Naive thymus-derived CD4-positive, alpha-beta T cell (primary cell): ENCODE measurements at regions of chr9 and their contacts with region 1.

Region 1: GRCh38 chr9:73183917-73184861 is 32.5 kb downstream of the ANXA1 start:
- DNase-seq: peak in 6 of 9 donors; percentile 41 to 70 (median 57)
- ATAC-seq: peak; percentile 50
- H3K4me3 ChIP-seq: no peak overlapping the region
- H3K4me3 Mint-ChIP-seq: no peak overlapping the region
- H3K27ac ChIP-seq: no peak overlapping the region
- H3K27ac Mint-ChIP-seq: no peak overlapping the region
- H3K4me1 ChIP-seq: no peaks in the 10 kb centered on the region
- H3K4me1 Mint-ChIP-seq: peaks cover 0 to 7% (median 0%) of the 10 kb centered on the region in 7 donors
- H3K27me3 ChIP-seq: no peaks in the 10 kb centered on the region
- H3K27me3 Mint-ChIP-seq: peaks cover 17 to 37% (median 25%) of the 10 kb centered on the region in 5 donors

Region 2: GRCh38 chr9:72038890-72039410 is 1145.2 kb before region 1 on chr9:
- CTCF ChIA-PET with region 1: no interaction called
- POLR2A ChIA-PET with region 1: no interaction called
- intact Hi-C with region 1: loop called in 1 of 2 experiments (anchors 5 kb)
- DNase-seq: peak; percentile 15 to 59 (median 41)
- ATAC-seq: peak; percentile 76
- H3K4me3 ChIP-seq: no peak overlapping the region
- H3K4me3 Mint-ChIP-seq: peak overlapping the region in 1 of 10 donors; percentile 66
- H3K27ac ChIP-seq: no peak overlapping the region
- H3K27ac Mint-ChIP-seq: no peak overlapping the region
- H3K4me1 ChIP-seq: peaks cover 0 to 3% of the 10 kb centered on the region in 2 donors
- H3K4me1 Mint-ChIP-seq: peaks cover 0 to 7% (median 4%) of the 10 kb centered on the region in 7 donors
- H3K27me3 ChIP-seq: no peaks in the 10 kb centered on the region
- H3K27me3 Mint-ChIP-seq: peaks cover 4 to 22% (median 6%) of the 10 kb centered on the region in 5 donors

Region 3: DNA sequence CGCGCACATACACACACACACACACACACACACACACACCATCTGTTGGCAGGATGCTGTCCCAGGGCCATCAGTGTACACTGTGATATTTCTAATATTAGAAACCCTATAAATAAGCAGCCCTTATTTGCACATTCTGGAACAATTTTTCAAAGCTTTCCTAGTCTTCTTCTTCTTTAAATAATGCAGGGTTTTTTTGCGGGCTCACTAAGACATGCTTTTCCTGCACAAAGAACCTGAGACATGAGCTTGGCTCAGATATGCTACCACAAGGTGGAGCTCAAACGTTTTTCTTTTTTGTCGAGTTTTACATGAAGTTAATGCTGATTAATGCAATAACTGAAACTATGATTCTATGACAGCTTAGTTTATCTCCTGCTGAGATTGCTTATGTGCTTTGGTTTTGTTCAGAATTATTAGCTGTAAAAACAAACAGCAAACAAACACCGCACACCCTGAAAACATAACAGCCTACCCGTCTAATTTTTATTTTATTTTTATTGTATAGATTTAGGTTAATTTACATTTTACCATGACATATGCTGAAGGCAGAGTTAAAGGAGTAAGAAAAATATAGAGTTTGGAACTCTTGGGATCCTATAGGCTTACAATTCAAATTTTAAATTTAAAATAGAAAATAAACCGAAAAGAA is 327.1 kb before region 1 on chr9:
- CTCF ChIA-PET with region 1: no interaction called
- POLR2A ChIA-PET with region 1: no interaction called
- intact Hi-C with region 1: loop called (anchors 2 to 5 kb)
- DNase-seq: peak in 1 of 9 donors; percentile 4
- ATAC-seq: peak; percentile 45
- H3K4me3 ChIP-seq: no peak overlapping the region
- H3K4me3 Mint-ChIP-seq: no peak overlapping the region
- H3K27ac ChIP-seq: no peak overlapping the region
- H3K27ac Mint-ChIP-seq: no peak overlapping the region
- H3K4me1 ChIP-seq: no peaks in the 10 kb centered on the region
- H3K4me1 Mint-ChIP-seq: peaks cover 0 to 5% (median 0%) of the 10 kb centered on the region in 7 donors
- H3K27me3 ChIP-seq: no peaks in the 10 kb centered on the region
- H3K27me3 Mint-ChIP-seq: peaks cover 0 to 5% (median 0%) of the 10 kb centered on the region in 5 donors

Region 4: GRCh38 chr9:73081979-73082657 is 102.1 kb before region 1 on chr9:
- CTCF ChIA-PET with region 1: no interaction called
- POLR2A ChIA-PET with region 1: no interaction called
- intact Hi-C with region 1: loop called in 1 of 2 experiments (anchors 1 kb)
- DNase-seq: peak in 4 of 9 donors; percentile 8 to 20 (median 15)
- ATAC-seq: peak; percentile 57
- H3K4me3 ChIP-seq: no peak overlapping the region
- H3K4me3 Mint-ChIP-seq: no peak overlapping the region
- H3K27ac ChIP-seq: no peak overlapping the region
- H3K27ac Mint-ChIP-seq: no peak overlapping the region
- H3K4me1 ChIP-seq: no peaks in the 10 kb centered on the region
- H3K4me1 Mint-ChIP-seq: no peaks in the 10 kb centered on the region
- H3K27me3 ChIP-seq: no peaks in the 10 kb centered on the region
- H3K27me3 Mint-ChIP-seq: peaks cover 8 to 31% (median 18%) of the 10 kb centered on the region in 5 donors

Region 5: DNA sequence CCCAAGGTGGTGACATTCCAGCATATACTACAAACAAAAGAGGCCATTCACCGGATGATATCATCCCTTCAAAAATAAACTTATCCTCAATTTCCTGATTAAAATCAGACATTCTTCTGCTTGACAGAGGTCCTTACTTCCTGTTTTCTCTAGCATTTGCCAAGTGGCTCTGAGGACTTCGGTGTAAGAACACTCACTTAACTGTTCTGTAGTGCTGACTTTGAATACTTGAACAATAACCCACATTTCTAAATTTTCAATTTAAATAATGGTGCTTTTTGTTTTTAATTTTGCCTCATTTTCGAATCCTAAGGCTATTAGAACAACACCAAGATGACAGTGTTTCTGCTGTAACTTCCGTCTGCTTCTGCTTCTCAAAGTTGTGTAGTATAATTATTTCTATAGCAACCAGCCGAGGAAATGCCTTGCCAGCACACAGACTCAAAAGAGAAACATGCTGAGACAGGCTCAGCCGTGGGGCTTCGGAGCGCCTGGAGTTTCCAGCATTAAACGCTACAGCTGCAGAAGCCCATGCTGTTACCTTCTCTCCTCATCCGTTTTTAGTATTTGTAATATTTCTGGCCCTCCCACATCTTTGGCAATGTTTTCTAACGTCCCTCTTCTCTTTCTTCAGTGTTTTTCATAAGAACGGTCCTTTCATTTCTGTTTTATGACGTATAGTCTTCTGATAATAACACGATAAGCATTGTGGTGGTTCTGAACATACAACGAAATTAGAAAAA is 52.0 kb before region 1 on chr9:
- CTCF ChIA-PET with region 1: interaction called, 4 read pairs
- POLR2A ChIA-PET with region 1: no interaction called
- intact Hi-C with region 1: loop called in 1 of 2 experiments (anchors 1 kb)
- DNase-seq: peak; percentile 51 to 91 (median 85)
- ATAC-seq: peak; percentile 97
- H3K4me3 ChIP-seq: peak overlapping the region; percentile 78
- H3K4me3 Mint-ChIP-seq: peak overlapping the region; percentile 74 to 97 (median 90)
- H3K27ac ChIP-seq: peak overlapping the region; percentile 90
- H3K27ac Mint-ChIP-seq: peak overlapping the region; percentile 93 to 99 (median 95)
- H3K4me1 ChIP-seq: peaks cover 9% of the 10 kb centered on the region in 2 donors
- H3K4me1 Mint-ChIP-seq: peaks cover 20 to 47% (median 37%) of the 10 kb centered on the region in 7 donors
- H3K27me3 ChIP-seq: no peaks in the 10 kb centered on the region
- H3K27me3 Mint-ChIP-seq: no peaks in the 10 kb centered on the region

Region 6: DNA sequence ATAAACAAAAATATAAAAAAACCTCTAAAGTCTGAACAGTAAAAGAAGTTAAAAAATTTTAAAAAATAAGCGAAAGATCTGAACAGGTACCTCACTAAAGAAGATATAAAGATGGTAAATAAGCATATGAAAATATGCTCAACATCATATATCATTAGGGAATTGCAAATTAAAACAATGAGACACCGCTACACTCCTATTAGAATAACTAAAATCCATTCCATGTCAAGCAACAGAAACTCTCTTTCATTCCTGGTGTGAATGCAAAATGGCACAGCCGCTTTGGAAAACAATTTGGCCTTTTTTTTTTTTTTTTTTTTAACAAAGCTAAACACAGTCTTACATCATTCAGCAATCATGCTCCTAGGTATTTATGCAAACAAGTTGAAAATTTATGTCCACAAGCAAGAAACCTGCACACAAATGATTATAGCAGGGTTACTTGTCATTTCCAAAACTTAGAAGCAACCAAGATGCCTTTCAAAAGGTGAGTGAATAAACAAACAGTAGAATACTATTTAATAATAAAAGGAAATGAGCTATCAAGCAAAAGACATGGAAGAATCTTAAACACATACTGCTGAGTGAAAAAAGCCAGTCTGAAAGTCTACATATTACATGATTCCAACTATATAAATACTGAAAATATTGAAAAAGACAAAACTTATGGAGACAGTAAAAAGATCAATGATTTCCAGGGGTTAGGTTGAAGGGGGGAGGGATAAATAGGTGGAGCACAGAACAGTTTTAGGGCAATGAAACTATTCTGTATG is 10.4 kb before region 1 on chr9:
- CTCF ChIA-PET with region 1: interaction called, 11 read pairs
- POLR2A ChIA-PET with region 1: no interaction called
- intact Hi-C with region 1: loop called in 1 of 2 experiments (anchors 2 kb)
- DNase-seq: no peak
- ATAC-seq: no peak
- H3K4me3 ChIP-seq: no peak overlapping the region
- H3K4me3 Mint-ChIP-seq: no peak overlapping the region
- H3K27ac ChIP-seq: no peak overlapping the region
- H3K27ac Mint-ChIP-seq: peak overlapping the region in 2 of 9 donors; percentile 37 to 39
- H3K4me1 ChIP-seq: no peaks in the 10 kb centered on the region
- H3K4me1 Mint-ChIP-seq: peaks cover 0 to 9% (median 0%) of the 10 kb centered on the region in 7 donors
- H3K27me3 ChIP-seq: no peaks in the 10 kb centered on the region
- H3K27me3 Mint-ChIP-seq: no peaks in the 10 kb centered on the region

Region 7: GRCh38 chr9:73753171-73753570 is 569.0 kb after region 1 on chr9:
- CTCF ChIA-PET with region 1: no interaction called
- POLR2A ChIA-PET with region 1: no interaction called
- intact Hi-C with region 1: no loop called
- DNase-seq: no peak
- ATAC-seq: no peak
- H3K4me3 ChIP-seq: no peak overlapping the region
- H3K4me3 Mint-ChIP-seq: no peak overlapping the region
- H3K27ac ChIP-seq: no peak overlapping the region
- H3K27ac Mint-ChIP-seq: no peak overlapping the region
- H3K4me1 ChIP-seq: no peaks in the 10 kb centered on the region
- H3K4me1 Mint-ChIP-seq: no peaks in the 10 kb centered on the region
- H3K27me3 ChIP-seq: no peaks in the 10 kb centered on the region
- H3K27me3 Mint-ChIP-seq: no peaks in the 10 kb centered on the region